HAP-1 (cell line): ENCODE measurements at regions of chr1 and their contacts with region 1.

Region 1: GRCh38 chr1:160031365-160032164 is at the start of gene PIGM:
- DNase-seq: peak; percentile 90 to 98
- H3K4me3 ChIP-seq: peak within 1 kb of the TSS; percentile 68
- H3K4me1 ChIP-seq: peaks cover 15% of the 10 kb centered on the region
- H3K27me3 ChIP-seq: no peaks in the 10 kb centered on the region

Region 2: DNA sequence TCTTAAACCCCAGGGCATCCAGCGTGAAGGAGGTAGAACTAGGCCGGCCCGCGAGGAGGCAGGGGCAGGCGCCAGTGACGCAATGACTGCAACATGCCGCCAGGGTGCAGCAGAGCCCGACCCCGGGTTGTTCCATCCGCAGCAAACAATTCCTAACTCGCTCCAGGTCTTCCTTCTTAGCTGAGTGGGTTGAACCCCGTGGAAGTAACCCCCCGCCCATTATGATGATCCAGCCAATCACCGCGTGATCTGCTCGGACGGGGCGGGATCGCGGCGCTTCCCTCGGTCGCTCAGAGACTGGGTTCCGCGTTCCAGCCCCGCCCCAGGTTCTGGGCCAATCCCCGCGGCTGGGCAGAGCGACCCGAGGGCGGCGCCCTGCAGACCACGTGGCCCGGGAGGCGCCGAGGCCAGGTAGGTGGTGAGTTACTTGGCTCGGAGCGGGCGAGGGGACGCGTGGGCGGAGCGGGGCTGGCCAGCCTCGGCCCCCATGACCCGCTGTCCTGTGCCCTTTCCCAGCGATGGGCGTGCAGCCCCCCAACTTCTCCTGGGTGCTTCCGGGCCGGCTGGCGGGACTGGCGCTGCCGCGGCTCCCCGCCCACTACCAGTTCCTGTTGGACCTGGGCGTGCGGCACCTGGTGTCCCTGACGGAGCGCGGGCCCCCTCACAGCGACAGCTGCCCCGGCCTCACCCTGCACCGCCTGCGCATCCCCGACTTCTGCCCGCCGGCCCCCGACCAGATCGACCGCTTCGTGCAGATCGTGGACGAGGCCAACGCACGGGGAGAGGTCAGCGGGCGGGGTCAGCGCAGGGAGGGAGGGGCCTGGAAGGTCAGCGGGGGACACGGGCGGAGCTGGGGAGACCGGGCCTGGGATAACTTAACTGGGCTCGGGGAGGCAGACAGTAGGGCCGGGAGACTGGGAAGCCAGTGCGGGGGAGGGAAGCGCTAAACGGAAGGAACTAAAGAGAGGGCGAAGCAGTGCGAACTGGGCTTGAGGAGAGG is 250.7 kb before region 1 on chr1 and contains the start of gene DUSP23:
- in situ Hi-C with region 1: loop called (anchors 10 kb)
- DNase-seq: peak; percentile 92 to 96
- H3K4me3 ChIP-seq: peak within 1 kb of the TSS; percentile 37
- H3K4me1 ChIP-seq: peaks cover 4% of the 10 kb centered on the region; the same call in 1 of the 2 replicates
- H3K27me3 ChIP-seq: no peaks in the 10 kb centered on the region